CD4-positive, alpha-beta memory T cell (primary cell): ENCODE measurements at regions of chr10 and their contacts with region 1.

Region 1: GRCh38 chr10:121927841-121928527 is at the start of gene ATE1:
- DNase-seq: peak; percentile 80 to 83 (median 81)
- H3K4me3 ChIP-seq: peak within 1 kb of the TSS; percentile 65 to 97
- H3K4me3 Mint-ChIP-seq: peak within 1 kb of the TSS; percentile 92 to 97 (median 94)
- H3K27ac ChIP-seq: peak within 1 kb of the TSS; percentile 90
- H3K27ac Mint-ChIP-seq: peak within 1 kb of the TSS; percentile 89 to 99 (median 97)
- H3K4me1 ChIP-seq: peaks cover 17% of the 10 kb centered on the region
- H3K4me1 Mint-ChIP-seq: peaks cover 13 to 38% (median 27%) of the 10 kb centered on the region in 4 donors
- H3K27me3 ChIP-seq: no peaks in the 10 kb centered on the region
- H3K27me3 Mint-ChIP-seq: no peaks in the 10 kb centered on the region
- total RNA-seq, gene ATE1: 24.5 to 26.2 TPM

Region 2: GRCh38 chr10:121910673-121911420 is 17.1 kb before region 1 on chr10:
- CTCF ChIA-PET with region 1: no interaction called
- POLR2A ChIA-PET with region 1: no interaction called
- intact Hi-C with region 1: no loop called
- DNase-seq: no peak
- H3K4me3 ChIP-seq: no peak overlapping the region
- H3K4me3 Mint-ChIP-seq: no peak overlapping the region
- H3K27ac ChIP-seq: no peak overlapping the region
- H3K27ac Mint-ChIP-seq: peak overlapping the region in 4 of 7 donors; percentile 9 to 76 (median 27)
- H3K4me1 ChIP-seq: no peaks in the 10 kb centered on the region
- H3K4me1 Mint-ChIP-seq: peaks cover 0 to 4% (median 2%) of the 10 kb centered on the region in 4 donors
- H3K27me3 ChIP-seq: no peaks in the 10 kb centered on the region
- H3K27me3 Mint-ChIP-seq: no peaks in the 10 kb centered on the region

Region 3: DNA sequence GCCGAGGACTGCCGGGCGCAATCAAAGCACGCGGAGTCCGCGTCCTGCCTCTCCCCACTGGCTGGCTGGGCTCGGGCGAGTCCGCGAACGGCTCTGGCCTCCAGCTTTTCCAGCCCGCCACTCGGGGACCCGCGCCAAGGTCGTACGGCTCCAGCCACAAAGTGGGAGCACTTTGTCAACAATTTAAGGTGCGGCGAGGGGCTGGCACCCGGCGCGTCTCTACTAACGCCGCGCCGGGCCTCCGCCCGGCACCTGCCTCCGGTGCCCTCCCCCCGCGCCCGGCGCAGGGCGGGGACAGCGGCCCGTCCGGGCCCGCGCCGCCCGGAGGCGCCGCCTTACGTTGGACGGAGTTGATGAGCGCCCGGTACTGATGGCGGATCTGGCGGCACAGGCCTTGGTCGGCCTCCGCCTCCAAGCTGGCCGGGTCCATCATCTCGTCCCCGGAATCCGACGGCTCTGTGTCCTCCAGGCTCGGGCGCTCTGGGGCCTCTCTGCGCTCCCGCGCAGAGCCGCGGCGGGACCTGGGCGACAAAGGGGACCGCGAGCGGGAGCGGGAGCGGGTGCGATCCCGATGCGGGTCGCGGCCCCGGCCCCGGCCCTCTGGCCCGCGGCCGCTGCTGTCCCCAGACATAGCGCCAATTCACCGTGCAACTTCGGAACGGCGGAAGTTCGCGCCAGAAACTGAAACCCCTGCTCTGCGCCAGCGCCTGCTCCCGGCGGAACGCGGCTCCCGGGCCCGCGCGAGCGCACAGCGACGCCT is 46.7 kb after region 1 on chr10 and contains the start of gene NSMCE4A:
- CTCF ChIA-PET with region 1: interaction called, 3 read pairs
- POLR2A ChIA-PET with region 1: interaction called, 11 read pairs
- intact Hi-C with region 1: loop called (anchors 1 kb)
- DNase-seq: peak; percentile 59 to 72 (median 65)
- H3K4me3 ChIP-seq: peak within 1 kb of the TSS; percentile 52 to 77
- H3K4me3 Mint-ChIP-seq: peak within 1 kb of the TSS; percentile 78 to 87 (median 83)
- H3K27ac ChIP-seq: peak within 1 kb of the TSS; percentile 62
- H3K27ac Mint-ChIP-seq: peak within 1 kb of the TSS in 4 of 7 donors; percentile 7 to 62 (median 29)
- H3K4me1 ChIP-seq: peaks cover 20% of the 10 kb centered on the region
- H3K4me1 Mint-ChIP-seq: peaks cover 14 to 34% (median 20%) of the 10 kb centered on the region in 4 donors
- H3K27me3 ChIP-seq: no peaks in the 10 kb centered on the region
- H3K27me3 Mint-ChIP-seq: no peaks in the 10 kb centered on the region
- total RNA-seq, gene NSMCE4A: 71.2 to 74.8 TPM

Region 4: GRCh38 chr10:123008439-123009205 is 1080.6 kb after region 1 on chr10 and contains the starts of genes ACADSB and IKZF5:
- CTCF ChIA-PET with region 1: no interaction called
- POLR2A ChIA-PET with region 1: no interaction called
- intact Hi-C with region 1: loop called (anchors 2 kb)
- DNase-seq: peak; percentile 95 to 99 (median 97)
- H3K4me3 ChIP-seq: peak within 1 kb of the TSS; percentile 68 to 87
- H3K4me3 Mint-ChIP-seq: peak within 1 kb of the TSS; percentile 96 to 100 (median 99)
- H3K27ac ChIP-seq: peak within 1 kb of the TSS; percentile 91
- H3K27ac Mint-ChIP-seq: peak within 1 kb of the TSS; percentile 92 to 100 (median 99)
- H3K4me1 ChIP-seq: peaks cover 57% of the 10 kb centered on the region
- H3K4me1 Mint-ChIP-seq: peaks cover 41 to 72% (median 55%) of the 10 kb centered on the region in 4 donors
- H3K27me3 ChIP-seq: no peaks in the 10 kb centered on the region
- H3K27me3 Mint-ChIP-seq: no peaks in the 10 kb centered on the region
- total RNA-seq, gene ACADSB: 35.7 to 36.4 TPM
- total RNA-seq, gene IKZF5: 37.4 to 45.9 TPM